Sciatic nerve (tissue), 2 donors: ENCODE measurements at regions of chr14 and their contacts with region 1.

Region 1: GRCh38 chr14:64636208-64636979 is 67.8 kb upstream of the PLEKHG3 start:
- DNase-seq: peak; percentile 80
- ATAC-seq: peak; percentile 90

Region 2: DNA sequence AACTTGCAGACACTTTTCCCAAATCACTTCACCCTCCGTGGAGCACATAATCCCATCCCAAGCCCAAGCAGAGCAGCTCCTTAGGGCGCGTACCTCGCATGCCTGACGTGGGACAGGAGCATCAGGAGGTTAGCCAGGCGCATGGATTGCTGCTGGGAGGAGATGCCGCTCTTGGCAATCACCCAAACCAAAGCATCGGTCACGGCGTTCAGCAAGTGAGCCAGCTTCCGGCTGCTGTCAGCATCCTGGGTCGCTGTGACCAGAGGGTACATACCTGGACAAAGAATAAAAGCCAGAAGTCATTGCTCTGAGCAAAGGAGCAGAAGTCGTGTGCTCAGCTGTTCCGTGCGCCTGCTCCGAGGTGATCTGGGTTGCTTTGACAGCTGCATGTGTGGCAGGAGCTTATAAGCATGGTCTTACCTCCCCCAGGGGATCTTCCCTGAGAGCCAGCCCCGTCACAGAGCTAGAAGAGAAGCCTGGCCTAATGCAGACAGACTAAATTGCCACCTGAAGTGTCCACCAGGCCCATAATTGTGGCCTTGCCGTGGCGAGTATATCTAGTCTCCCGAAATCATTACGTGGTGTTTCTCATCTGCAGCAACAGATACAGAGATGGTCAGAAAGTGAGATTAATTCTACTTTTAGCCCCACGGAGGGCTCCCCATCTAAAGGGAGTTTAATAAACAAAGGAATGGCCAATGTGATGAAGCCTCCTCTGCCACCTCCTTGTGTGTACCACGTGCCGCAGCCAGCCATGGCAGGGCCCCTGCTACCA is 401.3 kb before region 1 on chr14:
- intact Hi-C with region 1: no loop called
- DNase-seq: no peak
- ATAC-seq: peak; percentile 48

Region 3: GRCh38 chr14:64410084-64410774 is 226.2 kb before region 1 on chr14:
- intact Hi-C with region 1: no loop called
- DNase-seq: no peak
- ATAC-seq: no peak

Region 4: DNA sequence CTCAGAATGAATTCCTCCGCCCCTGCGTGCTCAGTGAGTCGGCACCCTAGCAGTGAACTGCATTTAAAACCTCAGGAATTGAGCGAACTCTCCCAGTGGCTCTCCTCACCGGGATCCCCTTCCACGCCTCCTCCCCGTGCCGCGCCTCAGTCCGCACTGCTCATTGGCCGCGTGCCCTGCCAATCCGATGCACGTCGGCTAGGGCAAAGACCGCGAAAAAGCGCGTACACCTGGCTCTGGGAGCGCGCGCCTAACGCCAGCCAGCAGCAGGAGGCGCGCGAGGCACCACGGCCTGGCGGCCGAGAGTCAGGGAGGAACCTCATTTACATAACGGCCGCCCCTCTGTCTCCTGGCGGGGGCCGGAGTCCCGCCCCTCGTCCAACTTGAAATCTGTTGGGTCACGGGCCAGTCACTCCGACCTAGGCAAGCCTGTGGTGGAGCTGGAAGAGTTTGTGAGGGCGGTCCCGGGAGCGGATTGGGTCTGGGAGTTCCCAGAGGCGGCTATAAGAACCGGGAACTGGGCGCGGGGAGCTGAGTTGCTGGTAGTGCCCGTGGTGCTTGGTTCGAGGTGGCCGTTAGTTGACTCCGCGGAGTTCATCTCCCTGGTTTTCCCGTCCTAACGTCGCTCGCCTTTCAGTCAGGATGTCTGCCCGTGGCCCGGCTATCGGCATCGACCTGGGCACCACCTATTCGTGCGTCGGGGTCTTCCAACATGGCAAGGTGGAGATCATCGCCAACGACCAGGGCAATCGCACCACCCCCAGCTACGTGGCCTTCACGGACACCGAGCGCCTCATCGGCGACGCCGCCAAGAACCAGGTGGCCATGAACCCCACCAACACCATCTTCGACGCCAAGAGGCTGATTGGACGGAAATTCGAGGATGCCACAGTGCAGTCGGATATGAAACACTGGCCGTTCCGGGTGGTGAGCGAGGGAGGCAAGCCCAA is 95.9 kb before region 1 on chr14 and contains the start of gene HSPA2:
- intact Hi-C with region 1: loop called (anchors 5 kb)
- DNase-seq: peak; percentile 99
- ATAC-seq: peak; percentile 98
- total RNA-seq, gene HSPA2: 71.5 TPM